Mucosa of descending colon (tissue), 3 donors: ENCODE measurements at regions of chr2 and their contacts with region 1.

Region 1: DNA sequence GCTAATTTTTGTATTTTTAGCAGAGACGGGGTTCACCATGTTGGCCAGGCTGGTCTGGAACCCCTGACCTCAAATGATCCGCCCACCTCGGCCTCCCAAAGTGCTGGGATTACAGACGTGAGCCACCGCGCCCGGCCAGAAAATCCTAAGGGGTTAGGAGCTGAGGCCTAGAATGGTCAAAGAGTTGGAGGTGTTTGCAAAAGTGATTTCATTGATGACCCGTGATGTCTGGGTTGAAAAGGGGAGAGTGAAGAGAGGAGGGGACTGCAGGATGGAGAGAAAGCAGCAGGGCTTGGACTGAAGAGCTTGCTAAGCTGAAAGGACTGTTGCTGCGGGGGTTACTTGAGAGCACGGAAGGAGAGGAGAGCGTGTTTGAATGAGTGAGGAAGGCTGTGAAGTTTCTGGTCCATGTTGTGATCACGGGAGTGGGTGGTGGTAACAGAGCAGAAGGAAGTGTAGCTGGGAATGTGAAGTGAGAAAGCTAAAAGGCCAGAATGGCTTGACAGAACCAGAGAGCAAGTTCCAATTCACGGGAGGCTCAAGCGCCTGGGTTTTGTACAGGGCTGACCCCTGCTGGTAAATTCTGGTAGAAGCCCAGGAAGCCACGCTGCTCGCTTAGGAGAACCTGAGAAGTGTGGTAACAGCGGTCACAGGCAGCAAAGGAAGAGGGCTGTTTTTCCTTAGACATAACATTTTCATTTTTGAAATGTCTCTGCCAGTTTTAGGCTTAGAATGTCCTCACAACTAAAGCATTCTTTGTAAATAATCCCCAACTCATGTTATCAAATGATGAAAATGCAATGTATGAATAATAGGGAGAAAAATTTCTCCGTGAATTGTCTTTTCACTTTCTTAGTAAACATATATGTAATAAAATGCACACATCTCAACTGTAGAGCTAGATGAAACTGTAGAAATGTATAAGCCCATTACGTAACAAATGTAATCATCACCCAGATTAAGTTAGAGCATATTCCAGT is 40.5 kb upstream of the ACTR2 start:
- DNase-seq: peak; percentile 73 to 93 (median 87)
- ATAC-seq: peak; percentile 88
- H3K4me3 ChIP-seq: no peak overlapping the region
- H3K4me1 ChIP-seq: peaks cover 14% of the 10 kb centered on the region
- CTCF ChIP-seq: peak; percentile 73

Region 2: DNA sequence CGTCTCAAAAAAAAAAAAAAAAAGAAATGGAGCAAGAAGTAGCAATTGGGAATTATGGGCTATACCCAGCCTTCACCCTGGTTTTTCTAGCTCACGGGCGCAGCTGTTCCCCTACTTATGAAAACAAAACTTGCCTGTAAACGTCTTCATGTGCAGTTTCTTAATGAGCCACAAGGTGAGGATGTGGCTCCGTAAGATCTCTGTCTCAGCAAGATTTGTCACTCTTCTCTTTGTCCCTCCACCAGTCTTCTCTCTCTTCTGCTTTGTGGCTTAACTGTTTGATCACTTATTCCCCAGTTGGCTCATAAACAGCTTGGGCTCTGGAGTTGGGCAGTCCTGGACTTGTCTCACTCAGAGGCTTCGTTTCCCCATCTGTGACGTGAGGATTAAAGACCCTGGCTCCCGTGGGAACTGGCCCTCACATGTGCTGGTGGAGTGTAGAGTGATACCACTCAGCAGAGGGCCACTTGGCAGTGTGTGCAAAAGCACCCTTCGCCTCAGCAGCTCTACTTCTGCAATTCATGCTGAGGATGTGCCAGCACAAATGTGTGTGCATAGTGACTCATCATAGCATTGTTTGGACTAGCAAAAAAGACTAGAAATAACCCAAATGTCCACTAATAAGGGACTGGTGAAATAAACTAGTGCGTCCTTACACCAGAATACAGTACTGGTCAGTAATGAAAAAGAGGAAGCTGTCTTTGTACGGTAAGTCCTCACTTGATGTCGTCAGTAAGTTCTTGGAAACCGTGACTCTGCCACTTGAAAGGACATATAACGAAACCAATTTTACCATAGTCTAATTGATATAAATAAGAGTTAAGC is 122.2 kb before region 1 on chr2:
- intact Hi-C with region 1: loop called (anchors 10 kb)
- DNase-seq: peak in 1 of 3 donors; percentile 76
- ATAC-seq: peak; percentile 85
- H3K4me3 ChIP-seq: no peak overlapping the region
- H3K4me1 ChIP-seq: peaks cover 8% of the 10 kb centered on the region
- CTCF ChIP-seq: peak; percentile 47

Region 3: GRCh38 chr2:65070172-65070830 is 116.9 kb before region 1 on chr2:
- intact Hi-C with region 1: loop called (anchors 10 kb)
- DNase-seq: peak in 1 of 3 donors; percentile 59
- ATAC-seq: peak; percentile 86
- H3K4me3 ChIP-seq: no peak overlapping the region
- H3K4me1 ChIP-seq: peaks cover 8% of the 10 kb centered on the region
- CTCF ChIP-seq: no peak

Region 4: GRCh38 chr2:65411056-65411795 is 224.1 kb after region 1 on chr2:
- intact Hi-C with region 1: no loop called
- DNase-seq: peak in 1 of 3 donors; percentile 86
- ATAC-seq: peak; percentile 94
- H3K4me3 ChIP-seq: no peak overlapping the region
- H3K4me1 ChIP-seq: peaks cover 17% of the 10 kb centered on the region
- CTCF ChIP-seq: no peak

Region 5: GRCh38 chr2:65647249-65647842 is 460.2 kb after region 1 on chr2:
- intact Hi-C with region 1: no loop called
- DNase-seq: no peak
- ATAC-seq: no peak
- H3K4me3 ChIP-seq: no peak overlapping the region
- H3K4me1 ChIP-seq: no peaks in the 10 kb centered on the region
- CTCF ChIP-seq: no peak